Dorsolateral prefrontal cortex (tissue), 120 donors: ENCODE measurements at regions of chr6 and their contacts with region 1.

Region 1: DNA sequence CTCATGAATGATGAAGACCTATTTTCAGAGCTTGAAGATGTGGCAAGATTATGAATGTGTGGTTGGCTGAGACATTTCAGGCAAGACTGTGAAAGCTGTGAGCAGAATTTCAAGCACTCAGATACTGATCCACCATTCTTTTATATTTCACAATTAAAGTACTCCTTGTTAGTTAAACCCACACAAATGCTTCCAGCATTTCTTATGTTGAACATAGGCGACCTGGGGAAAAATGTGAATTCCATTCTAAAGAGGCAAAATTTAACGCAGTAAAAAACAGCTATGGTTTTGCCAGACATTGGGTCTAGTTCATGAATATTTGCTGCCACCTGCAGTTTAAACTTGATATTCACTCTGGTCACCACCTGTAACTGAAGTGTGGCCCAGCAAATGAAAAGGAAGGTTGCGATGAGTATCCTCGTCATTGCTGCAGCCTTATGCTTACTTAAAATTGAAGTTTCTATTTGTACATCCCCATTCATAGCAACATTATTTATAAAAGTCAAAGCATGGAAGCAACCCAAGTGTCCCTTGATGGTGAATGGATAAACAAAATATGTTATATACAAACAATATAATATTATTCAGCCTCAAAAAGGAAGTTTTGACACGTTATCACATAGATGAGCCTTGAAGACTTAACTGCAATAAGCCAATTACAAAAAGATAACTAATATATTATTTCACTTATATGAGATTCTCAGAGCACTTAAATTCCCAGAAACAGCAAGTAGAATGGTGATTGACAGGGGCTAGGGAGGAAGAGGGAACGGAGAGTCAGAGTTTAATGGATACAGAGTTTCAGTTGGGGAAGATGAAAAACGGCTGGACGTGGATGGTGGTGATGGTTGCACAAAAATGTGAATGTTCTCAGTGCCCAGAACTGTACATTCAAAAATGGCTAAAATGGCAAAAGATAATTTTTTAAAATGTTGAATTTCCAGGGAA is 32.4 kb upstream of the FAM184A start:
- DNase-seq: peak in 2 of 10 donors; percentile 28 to 30
- H3K4me3 ChIP-seq: peak overlapping the region in 16 of 59 donors; percentile 1 to 37 (median 12)
- H3K27ac ChIP-seq: peak overlapping the region in 19 of 59 donors; percentile 1 to 70 (median 34)
- H3K27me3 ChIP-seq: no peaks in the 10 kb centered on the region
- CTCF ChIP-seq: peak; percentile 33 to 94 (median 77)

Region 2: DNA sequence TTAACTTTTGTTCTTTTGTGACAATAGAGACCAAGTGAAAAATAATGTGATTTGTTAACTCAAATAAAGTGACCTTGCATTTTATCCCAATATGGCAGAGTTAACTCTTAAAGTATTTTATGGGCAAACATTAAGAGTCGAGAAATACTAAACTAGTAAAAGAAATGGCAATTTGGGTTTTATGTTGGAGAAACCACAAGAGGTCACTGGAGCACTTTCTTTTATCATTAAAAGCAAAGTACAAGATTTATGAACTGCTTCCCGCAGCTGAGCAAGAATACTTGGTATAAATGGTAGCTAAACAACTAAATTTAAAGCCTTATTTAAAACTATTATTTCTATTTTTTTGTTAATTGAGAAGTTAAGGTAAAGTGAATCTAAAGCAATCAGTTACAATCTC is 142.5 kb before region 1 on chr6:
- intact Hi-C with region 1: loop called (anchors 2 to 5 kb)
- DNase-seq: no peak
- H3K4me3 ChIP-seq: no peak overlapping the region
- H3K27ac ChIP-seq: no peak overlapping the region
- H3K27me3 ChIP-seq: no peaks in the 10 kb centered on the region
- CTCF ChIP-seq: peak in 54 of 56 donors; percentile 22 to 84 (median 60)